Activated CD8-positive, alpha-beta memory T cell treated with anti-CD3 and anti-CD28 coated beads, Interleukin-2, amount 10 ng/mL, durations not matched to agents 7 days and 5 days (primary cell): ENCODE measurements at regions of chr5 and their contacts with region 1.

Region 1: DNA sequence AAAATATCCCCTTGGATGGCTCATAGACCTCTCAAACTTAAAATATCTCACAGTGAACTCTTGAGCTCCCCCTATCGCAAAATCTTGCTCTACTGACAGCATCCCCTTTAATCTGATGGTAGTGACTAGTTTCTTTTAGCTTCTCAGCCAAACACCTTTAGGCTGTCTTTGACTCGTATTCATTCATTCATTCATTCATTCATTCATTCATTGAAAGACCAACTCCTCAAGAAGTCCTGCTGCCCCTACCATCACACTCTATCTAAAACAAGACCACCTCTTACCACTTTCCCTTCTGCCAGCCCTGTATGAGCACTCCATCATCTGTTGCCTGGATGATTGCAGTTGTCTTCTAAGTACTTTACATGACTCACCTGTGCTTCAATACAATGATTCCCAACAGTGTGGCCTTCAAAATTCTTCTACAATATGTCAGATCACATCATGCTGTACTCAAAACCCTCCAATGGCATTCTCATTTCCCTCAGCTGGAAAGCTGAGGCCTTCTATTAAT is 46.8 kb downstream of the ITGA2 start:
- DNase-seq: no peak
- ATAC-seq: no peak
- H3K4me3 Mint-ChIP-seq: no peak overlapping the region
- H3K27ac Mint-ChIP-seq: peak overlapping the region; percentile 4
- H3K4me1 Mint-ChIP-seq: peaks cover 81% of the 10 kb centered on the region
- H3K27me3 Mint-ChIP-seq: no peaks in the 10 kb centered on the region

Region 2: GRCh38 chr5:52893105-52893504 is 142.8 kb before region 1 on chr5:
- CTCF ChIA-PET with region 1: no interaction called
- DNase-seq: no peak
- ATAC-seq: no peak
- H3K4me3 Mint-ChIP-seq: no peak overlapping the region
- H3K27ac Mint-ChIP-seq: no peak overlapping the region
- H3K4me1 Mint-ChIP-seq: no peaks in the 10 kb centered on the region
- H3K27me3 Mint-ChIP-seq: no peaks in the 10 kb centered on the region

Region 3: GRCh38 chr5:52989781-52990527 is 46.0 kb before region 1 on chr5:
- CTCF ChIA-PET with region 1: interaction called, 23 read pairs
- DNase-seq: peak; percentile 67
- ATAC-seq: peak; percentile 56
- H3K4me3 Mint-ChIP-seq: peak overlapping the region; percentile 81
- H3K27ac Mint-ChIP-seq: peak overlapping the region; percentile 67
- H3K4me1 Mint-ChIP-seq: peaks cover 56% of the 10 kb centered on the region
- H3K27me3 Mint-ChIP-seq: peaks cover 13% of the 10 kb centered on the region

Region 4: GRCh38 chr5:52997424-52997823 is 38.5 kb before region 1 on chr5:
- CTCF ChIA-PET with region 1: interaction called, 10 read pairs
- DNase-seq: no peak
- ATAC-seq: no peak
- H3K4me3 Mint-ChIP-seq: no peak overlapping the region
- H3K27ac Mint-ChIP-seq: no peak overlapping the region
- H3K4me1 Mint-ChIP-seq: peaks cover 47% of the 10 kb centered on the region
- H3K27me3 Mint-ChIP-seq: peaks cover 2% of the 10 kb centered on the region

Region 5: GRCh38 chr5:53069626-53070025 is 33.7 kb after region 1 on chr5:
- CTCF ChIA-PET with region 1: interaction called, 12 read pairs
- DNase-seq: peak; percentile 90
- ATAC-seq: peak; percentile 96
- H3K4me3 Mint-ChIP-seq: peak overlapping the region; percentile 25
- H3K27ac Mint-ChIP-seq: peak overlapping the region; percentile 83
- H3K4me1 Mint-ChIP-seq: peaks cover 36% of the 10 kb centered on the region
- H3K27me3 Mint-ChIP-seq: no peaks in the 10 kb centered on the region

Region 6: GRCh38 chr5:53089345-53089991 is 53.5 kb after region 1 on chr5:
- CTCF ChIA-PET with region 1: interaction called, 13 read pairs
- DNase-seq: no peak
- ATAC-seq: peak; percentile 64
- H3K4me3 Mint-ChIP-seq: peak overlapping the region; percentile 26
- H3K27ac Mint-ChIP-seq: peak overlapping the region; percentile 71
- H3K4me1 Mint-ChIP-seq: peaks cover 37% of the 10 kb centered on the region
- H3K27me3 Mint-ChIP-seq: no peaks in the 10 kb centered on the region